Activated naive CD8-positive, alpha-beta T cell treated with anti-CD3 and anti-CD28 coated beads, Interleukin-2, amount 10 ng/mL, durations not matched to agents 7 days and 5 days (primary cell): ENCODE measurements at regions of chr16 and their contacts with region 1.

Region 1: DNA sequence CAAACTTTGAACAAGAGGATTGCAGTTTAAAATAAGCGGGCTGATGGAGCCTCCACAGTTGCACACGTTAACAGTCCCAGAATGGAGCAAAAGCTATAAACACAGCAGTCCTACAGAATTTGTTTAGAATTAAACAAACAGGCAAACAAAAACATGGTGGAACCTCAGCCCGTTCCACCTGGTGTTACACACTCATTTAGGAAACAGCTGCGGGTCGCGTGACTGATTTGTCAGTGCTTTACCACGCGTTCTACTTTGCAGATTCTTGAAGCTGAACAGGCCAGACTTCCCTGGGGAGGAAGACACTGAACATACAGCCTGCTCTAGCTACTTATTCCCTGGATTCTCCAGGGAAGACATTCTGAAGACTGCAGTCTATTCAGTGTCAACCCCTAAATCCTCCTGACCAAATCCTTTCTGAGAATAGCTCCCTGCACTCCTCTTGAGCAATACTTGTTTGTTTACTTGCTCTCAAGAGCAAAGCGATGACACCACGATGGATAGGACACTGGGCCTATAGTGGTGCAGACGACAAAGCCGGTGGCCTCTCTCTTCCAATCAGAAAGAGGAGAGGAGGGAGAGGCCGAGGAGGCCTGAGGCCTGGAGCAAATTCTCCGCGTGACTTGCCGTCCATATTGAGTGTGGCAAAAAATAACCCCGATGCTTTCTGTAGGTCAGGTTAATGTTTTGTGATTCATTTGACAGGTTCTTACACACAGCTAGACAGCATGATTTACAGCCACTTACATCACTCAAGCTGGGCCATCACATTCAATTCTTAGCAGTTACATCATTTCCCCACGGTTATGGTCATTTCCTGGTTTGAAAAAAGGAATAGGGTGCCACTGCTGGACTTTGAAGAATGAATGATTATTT is 4.0 kb upstream of the MAP1LC3B start:
- DNase-seq: peak; percentile 71
- ATAC-seq: peak; percentile 68
- H3K4me3 Mint-ChIP-seq: peak overlapping the region; percentile 67
- H3K27ac Mint-ChIP-seq: peak overlapping the region; percentile 95
- H3K4me1 Mint-ChIP-seq: peaks cover 30% of the 10 kb centered on the region
- H3K27me3 Mint-ChIP-seq: no peaks in the 10 kb centered on the region

Region 2: GRCh38 chr16:86718118-86718517 is 670.1 kb before region 1 on chr16:
- POLR2A ChIA-PET with region 1: no interaction called
- DNase-seq: no peak
- ATAC-seq: no peak
- H3K4me3 Mint-ChIP-seq: no peak overlapping the region
- H3K27ac Mint-ChIP-seq: no peak overlapping the region
- H3K4me1 Mint-ChIP-seq: no peaks in the 10 kb centered on the region
- H3K27me3 Mint-ChIP-seq: peaks cover 5% of the 10 kb centered on the region

Region 3: GRCh38 chr16:87316923-87317749 is 71.0 kb before region 1 on chr16 and contains the start of gene C16orf95:
- POLR2A ChIA-PET with region 1: interaction called, 25 read pairs
- DNase-seq: peak; percentile 95
- ATAC-seq: peak; percentile 90
- H3K4me3 Mint-ChIP-seq: peak within 1 kb of the TSS; percentile 90
- H3K27ac Mint-ChIP-seq: peak within 1 kb of the TSS; percentile 97
- H3K4me1 Mint-ChIP-seq: peaks cover 16% of the 10 kb centered on the region
- H3K27me3 Mint-ChIP-seq: no peaks in the 10 kb centered on the region
- total RNA-seq, gene C16orf95: 4.9 to 8.0 TPM

Region 4: DNA sequence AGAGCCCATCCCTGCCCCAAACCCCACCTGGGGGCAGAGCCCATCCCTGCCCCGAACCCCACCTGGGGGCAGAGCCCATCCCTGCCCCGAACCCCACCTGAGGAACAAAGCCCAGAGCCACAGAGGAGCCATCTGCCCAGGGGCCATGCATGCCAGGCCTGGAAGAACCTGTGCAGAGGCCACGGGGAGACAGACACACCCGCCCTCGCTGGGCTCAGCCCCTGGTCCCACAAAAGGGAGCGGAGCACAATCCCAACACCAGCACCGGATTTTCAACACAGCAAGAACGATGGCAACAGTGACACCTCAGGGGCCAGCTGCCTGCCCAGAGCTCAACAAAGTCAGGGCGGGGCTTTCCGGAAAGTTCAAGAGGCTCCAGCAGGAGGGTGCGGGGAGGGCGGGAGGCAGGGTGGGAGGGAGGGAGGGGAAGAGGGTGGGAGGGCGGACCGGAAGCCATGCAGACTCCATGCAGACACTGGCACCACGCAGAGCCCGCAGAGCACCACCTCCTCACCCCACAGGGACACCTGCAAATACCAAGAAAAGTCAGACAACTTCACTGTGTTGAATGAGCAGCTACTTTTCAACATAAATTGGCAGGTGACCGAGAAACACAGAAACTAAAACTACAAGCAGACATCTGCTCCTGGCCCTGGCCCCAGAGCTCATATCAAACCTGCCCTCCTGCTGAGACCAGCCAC is 43.1 kb before region 1 on chr16:
- POLR2A ChIA-PET with region 1: interaction called, 12 read pairs
- DNase-seq: peak; percentile 58
- ATAC-seq: peak; percentile 86
- H3K4me3 Mint-ChIP-seq: peak overlapping the region; percentile 68
- H3K27ac Mint-ChIP-seq: peak overlapping the region; percentile 90
- H3K4me1 Mint-ChIP-seq: peaks cover 14% of the 10 kb centered on the region
- H3K27me3 Mint-ChIP-seq: no peaks in the 10 kb centered on the region

Region 5: GRCh38 chr16:87363771-87364455 is 24.3 kb before region 1 on chr16:
- POLR2A ChIA-PET with region 1: interaction called, 12 read pairs
- DNase-seq: no peak
- ATAC-seq: peak; percentile 32
- H3K4me3 Mint-ChIP-seq: peak overlapping the region; percentile 83
- H3K27ac Mint-ChIP-seq: peak overlapping the region; percentile 88
- H3K4me1 Mint-ChIP-seq: peaks cover 19% of the 10 kb centered on the region
- H3K27me3 Mint-ChIP-seq: no peaks in the 10 kb centered on the region